AG04449 (cell line): ENCODE measurements at regions of chrX and their contacts with region 1.

Region 1: GRCh38 chrX:104113222-104113965 is 1.1 kb downstream of the ZCCHC18 start:
- DNase-seq: no peak
- H3K4me3 ChIP-seq: peak overlapping the region; percentile 67
- CTCF ChIP-seq: peak; percentile 56

Region 2: DNA sequence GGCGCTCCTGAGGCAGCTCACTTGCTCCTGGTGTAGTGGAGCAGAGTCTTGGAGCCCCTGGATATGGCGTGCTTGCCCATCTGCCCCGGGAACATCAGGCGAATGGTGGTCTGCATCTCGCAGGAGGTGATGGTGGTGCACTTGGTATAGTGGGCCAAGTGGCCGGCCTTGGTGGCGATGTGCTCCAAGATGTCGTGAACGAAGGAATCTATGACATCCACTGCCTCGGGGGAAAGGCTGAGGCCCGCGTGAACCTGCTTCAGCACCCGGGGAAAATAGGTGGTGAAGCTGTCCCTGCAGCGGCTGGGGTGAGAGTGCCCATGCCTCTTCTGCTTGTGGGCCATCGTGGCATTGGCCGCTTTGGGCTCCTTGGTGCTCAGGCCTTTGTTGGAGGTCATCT is 209.1 kb before region 1 on chrX:
- CTCF ChIA-PET with region 1: no interaction called
- POLR2A ChIA-PET with region 1: no interaction called
- DNase-seq: no peak
- H3K4me3 ChIP-seq: no peak overlapping the region
- CTCF ChIP-seq: no peak

Region 3: GRCh38 chrX:104098151-104098808 is 15.1 kb before region 1 on chrX:
- CTCF ChIA-PET with region 1: interaction called, 21 read pairs
- POLR2A ChIA-PET with region 1: no interaction called
- DNase-seq: peak; percentile 21
- H3K4me3 ChIP-seq: no peak overlapping the region
- CTCF ChIP-seq: peak; percentile 37